Activated B cell treated with CpG ODN at 0.5 μM for 24 hours (primary cell): ENCODE measurements at regions of chr3 and their contacts with region 1.

Region 1: DNA sequence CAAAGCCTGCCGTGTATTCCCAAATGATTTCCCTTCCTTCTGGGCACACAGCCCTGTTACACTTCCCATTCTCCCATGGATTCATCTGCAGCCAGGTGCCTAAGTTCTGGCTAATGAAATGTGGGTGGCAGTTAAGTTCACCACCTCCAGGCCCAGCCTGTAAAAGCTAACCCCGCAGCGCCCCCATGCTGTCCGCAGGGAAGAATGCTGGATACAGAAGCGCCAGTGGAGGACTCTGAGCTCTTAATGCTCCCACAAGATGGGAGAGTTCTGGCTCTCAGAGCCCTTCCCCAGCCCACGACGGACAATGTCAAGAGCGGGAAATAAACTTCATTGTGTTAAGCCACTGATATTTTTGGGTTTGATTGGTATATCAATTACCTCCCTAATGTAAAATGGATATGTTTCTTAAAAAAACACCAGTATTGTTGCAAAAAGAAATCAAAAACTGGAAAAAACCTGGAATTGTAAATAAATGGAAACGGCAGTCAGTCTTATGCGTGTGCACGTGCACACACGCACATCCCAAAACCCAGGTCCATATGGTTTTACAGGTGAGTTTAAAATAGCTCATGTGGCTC is 37.7 kb upstream of the FGD5 start:
- DNase-seq: no peak
- ATAC-seq: peak; percentile 34
- H3K4me3 Mint-ChIP-seq: no peak overlapping the region
- H3K27ac Mint-ChIP-seq: no peak overlapping the region
- H3K4me1 Mint-ChIP-seq: no peaks in the 10 kb centered on the region
- H3K27me3 Mint-ChIP-seq: peaks cover 12% of the 10 kb centered on the region
- CTCF ChIP-seq: no peak

Region 2: GRCh38 chr3:14633819-14634424 is 147.1 kb before region 1 on chr3:
- CTCF ChIA-PET with region 1: no interaction called
- POLR2A ChIA-PET with region 1: no interaction called
- intact Hi-C with region 1: loop called (anchors 1 kb)
- DNase-seq: no peak
- ATAC-seq: peak; percentile 56
- H3K4me3 Mint-ChIP-seq: no peak overlapping the region
- H3K27ac Mint-ChIP-seq: no peak overlapping the region
- H3K4me1 Mint-ChIP-seq: no peaks in the 10 kb centered on the region
- H3K27me3 Mint-ChIP-seq: peaks cover 59% of the 10 kb centered on the region
- CTCF ChIP-seq: peak; percentile 28

Region 3: DNA sequence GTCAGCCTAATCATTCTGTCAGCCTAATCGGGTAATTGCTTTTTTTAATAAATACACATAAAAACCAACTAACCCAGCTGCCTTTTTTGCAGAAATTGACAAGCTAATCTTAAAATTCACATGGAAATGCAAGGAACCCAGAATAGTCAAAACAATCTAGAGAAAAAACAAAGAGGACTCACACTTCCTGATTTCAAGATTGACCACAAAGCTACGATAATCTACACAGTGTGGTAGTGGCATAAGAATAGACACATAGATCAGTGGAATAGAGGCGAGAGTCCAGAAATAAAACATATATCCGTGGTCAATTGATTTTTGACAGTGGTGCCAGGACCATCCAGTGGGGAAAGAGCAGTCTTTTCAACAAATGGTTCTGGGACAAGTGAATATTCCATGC is 108.4 kb before region 1 on chr3:
- CTCF ChIA-PET with region 1: interaction called, 3 read pairs
- POLR2A ChIA-PET with region 1: no interaction called
- intact Hi-C with region 1: loop called (anchors 2 kb)
- DNase-seq: no peak
- ATAC-seq: no peak
- H3K4me3 Mint-ChIP-seq: no peak overlapping the region
- H3K27ac Mint-ChIP-seq: no peak overlapping the region
- H3K4me1 Mint-ChIP-seq: no peaks in the 10 kb centered on the region
- H3K27me3 Mint-ChIP-seq: no peaks in the 10 kb centered on the region
- CTCF ChIP-seq: no peak

Region 4: GRCh38 chr3:16456784-16457415 is 1675.9 kb after region 1 on chr3:
- CTCF ChIA-PET with region 1: no interaction called
- POLR2A ChIA-PET with region 1: no interaction called
- intact Hi-C with region 1: no loop called
- DNase-seq: no peak
- ATAC-seq: no peak
- H3K4me3 Mint-ChIP-seq: no peak overlapping the region
- H3K27ac Mint-ChIP-seq: no peak overlapping the region
- H3K4me1 Mint-ChIP-seq: peaks cover 40% of the 10 kb centered on the region
- H3K27me3 Mint-ChIP-seq: no peaks in the 10 kb centered on the region
- CTCF ChIP-seq: no peak